HEK293 (cell line): ENCODE measurements at regions of chr11 and their contacts with region 1.

Region 1: DNA sequence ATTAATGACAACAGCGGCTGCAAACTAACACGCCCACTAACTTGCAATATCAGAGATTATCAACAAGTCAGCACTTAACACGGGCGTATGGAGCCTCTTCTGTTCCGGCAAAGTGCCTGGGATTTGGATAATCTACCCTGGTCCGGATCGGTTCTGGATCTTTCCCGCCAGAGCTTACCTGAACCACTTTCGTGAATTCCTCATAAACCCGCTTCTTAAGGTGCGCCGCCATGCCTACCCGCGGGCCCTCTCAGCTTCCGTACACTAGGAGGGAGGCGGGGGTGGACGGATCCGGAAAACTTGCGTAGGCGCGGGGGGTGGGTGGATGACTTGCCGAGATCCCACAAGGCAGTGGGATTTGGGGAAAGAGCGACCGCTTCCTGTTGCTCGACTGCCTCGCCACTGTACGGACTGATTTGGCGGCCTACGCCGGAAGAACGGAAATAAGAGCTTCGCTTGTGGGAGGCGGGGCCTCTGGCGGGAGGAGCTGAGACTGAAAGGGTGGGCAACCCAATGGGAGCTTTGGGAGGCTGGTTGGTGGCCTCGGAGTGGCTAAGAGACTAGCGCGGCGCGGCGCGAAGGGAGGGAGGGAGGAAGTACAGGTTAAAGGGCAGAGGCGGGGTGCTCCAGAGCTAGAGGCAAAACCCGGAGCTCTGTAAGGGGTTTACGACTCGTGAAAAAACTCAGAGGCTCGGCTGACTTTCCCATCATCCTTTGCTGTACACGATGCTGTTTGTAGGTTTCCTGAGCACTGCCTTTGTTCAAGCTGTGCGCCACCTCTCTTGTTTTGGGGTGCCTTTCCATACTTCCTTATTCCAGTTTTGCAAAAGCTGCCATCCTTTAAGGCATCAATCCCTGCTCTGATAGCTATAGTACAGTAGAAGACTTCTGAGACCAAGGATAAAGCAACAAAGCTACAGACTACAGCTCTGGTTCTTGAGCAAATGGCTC is at the start of gene INTS4:
- H3K4me3 ChIP-seq: peak within 1 kb of the TSS; percentile 81
- H3K27ac ChIP-seq: peak within 1 kb of the TSS; percentile 32; the same call in 1 of the 2 replicates
- H3K4me1 ChIP-seq: no peaks in the 10 kb centered on the region
- CTCF ChIP-seq: no peak

Region 2: DNA sequence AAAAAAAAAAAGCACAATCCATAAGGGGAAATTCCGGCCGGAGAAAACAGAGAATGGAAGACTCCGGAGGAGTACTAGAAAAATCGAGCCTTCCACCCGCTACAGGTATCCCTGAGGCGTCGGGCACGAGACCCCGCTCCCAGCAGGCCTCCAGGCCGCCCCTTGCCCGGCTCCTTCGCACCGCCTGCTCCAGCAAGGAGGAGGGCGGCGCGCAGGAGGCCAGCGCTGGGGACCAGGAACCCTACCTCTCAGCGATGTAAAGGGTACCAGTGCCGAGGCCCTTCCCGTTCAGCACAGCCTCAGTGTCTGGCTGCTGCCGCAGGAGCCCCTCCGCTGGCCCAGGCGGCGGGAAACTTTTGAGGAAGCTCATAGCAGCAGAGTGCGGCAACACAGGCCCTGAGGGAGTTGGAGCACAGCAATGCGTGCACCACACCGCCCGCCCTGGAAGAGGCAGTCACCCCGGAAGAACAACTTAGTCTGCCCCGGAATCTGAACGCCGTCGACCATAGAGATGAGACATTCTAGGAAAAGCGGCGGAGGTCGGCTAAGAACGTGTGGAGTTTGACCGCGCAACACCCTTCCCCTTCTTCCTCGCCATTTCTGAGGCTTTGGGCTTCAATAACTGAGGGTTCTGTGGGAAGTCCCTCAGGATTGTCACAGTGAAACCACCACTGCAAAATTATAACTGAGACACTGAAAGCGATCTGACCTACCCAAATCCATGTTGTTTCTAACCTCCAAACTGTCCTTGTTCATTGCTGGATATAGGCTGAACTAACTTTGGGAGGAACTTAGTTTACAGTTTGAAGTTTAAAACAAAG is 357.1 kb before region 1 on chr11 and contains the start of gene CLNS1A:
- CTCF ChIA-PET with region 1: no interaction called
- POLR2A ChIA-PET with region 1: interaction called, 14 read pairs
- H3K4me3 ChIP-seq: peak within 1 kb of the TSS; percentile 98
- H3K27ac ChIP-seq: peak within 1 kb of the TSS; percentile 62
- H3K4me1 ChIP-seq: no peaks in the 10 kb centered on the region
- CTCF ChIP-seq: no peak

Region 3: GRCh38 chr11:77820563-77821348 is 173.9 kb before region 1 on chr11 and contains the starts of genes AAMDC and RSF1:
- CTCF ChIA-PET with region 1: interaction called, 8 read pairs
- POLR2A ChIA-PET with region 1: interaction called, 19 read pairs
- H3K4me3 ChIP-seq: peak within 1 kb of the TSS; percentile 100
- H3K27ac ChIP-seq: peak within 1 kb of the TSS; percentile 94
- H3K4me1 ChIP-seq: no peaks in the 10 kb centered on the region
- CTCF ChIP-seq: peak; percentile 80

Region 4: DNA sequence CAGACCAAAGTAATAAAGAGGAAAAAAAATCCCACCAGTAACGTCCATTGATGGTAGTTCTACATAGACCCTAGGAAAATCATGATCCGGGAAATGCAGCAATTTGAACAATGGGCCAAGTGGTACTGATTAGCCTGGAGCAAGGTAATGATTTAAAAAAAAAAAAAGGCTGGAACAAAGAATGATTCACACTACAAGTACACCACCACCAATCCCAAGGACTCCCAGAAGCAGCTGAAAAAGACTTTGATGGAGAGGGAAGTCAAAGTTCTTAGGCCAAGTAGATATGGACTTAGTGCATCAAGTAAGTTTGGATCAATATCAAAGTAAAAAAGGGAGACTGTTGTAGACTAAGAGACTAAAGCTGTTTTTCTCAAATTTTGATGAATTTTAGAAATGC is 16.6 kb after region 1 on chr11:
- CTCF ChIA-PET with region 1: interaction called, 8 read pairs
- POLR2A ChIA-PET with region 1: interaction called, 11 read pairs
- H3K4me3 ChIP-seq: no peak overlapping the region
- H3K27ac ChIP-seq: no peak overlapping the region
- H3K4me1 ChIP-seq: no peaks in the 10 kb centered on the region
- CTCF ChIP-seq: no peak

Region 5: DNA sequence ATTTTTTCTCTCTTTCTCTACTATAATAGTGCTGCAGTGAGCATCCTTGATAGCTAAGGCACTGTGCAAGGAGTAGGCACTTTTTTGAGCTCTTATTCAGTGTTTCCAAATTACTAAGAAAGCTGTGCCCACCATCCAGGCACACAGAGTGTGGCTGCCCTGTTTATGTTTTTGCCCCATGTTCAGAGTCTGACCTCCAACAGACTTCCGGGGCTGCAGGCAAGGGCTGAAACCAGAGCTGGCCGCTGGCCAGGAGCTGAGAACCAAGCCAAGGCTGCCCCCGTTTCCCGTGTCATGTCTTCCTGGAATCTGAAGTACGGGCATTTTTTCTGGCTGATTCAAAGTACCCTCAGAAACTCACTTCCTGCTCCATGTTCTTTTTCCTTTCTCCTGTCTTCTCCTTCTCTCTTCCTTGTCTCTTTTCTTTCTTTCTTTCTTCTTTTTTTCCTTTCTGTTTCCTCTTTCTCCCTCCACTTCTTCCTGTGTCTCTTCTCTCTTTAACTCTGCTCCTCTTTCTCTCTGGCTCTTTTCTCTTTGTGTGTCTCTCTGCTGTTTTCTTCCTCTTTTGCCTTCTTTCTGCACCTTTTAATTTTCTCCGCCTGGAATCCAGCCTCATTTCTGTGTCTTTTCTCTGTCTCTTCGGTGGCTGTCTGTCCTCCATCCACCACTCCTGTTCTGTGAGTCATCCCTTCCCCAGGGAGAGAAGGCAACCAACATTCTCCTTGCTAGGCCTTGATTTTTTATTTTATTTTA is 45.4 kb after region 1 on chr11:
- CTCF ChIA-PET with region 1: interaction called, 17 read pairs
- POLR2A ChIA-PET with region 1: interaction called, 15 read pairs
- H3K4me3 ChIP-seq: no peak overlapping the region
- H3K27ac ChIP-seq: peak overlapping the region; percentile 39
- H3K4me1 ChIP-seq: no peaks in the 10 kb centered on the region
- CTCF ChIP-seq: no peak

Region 6: DNA sequence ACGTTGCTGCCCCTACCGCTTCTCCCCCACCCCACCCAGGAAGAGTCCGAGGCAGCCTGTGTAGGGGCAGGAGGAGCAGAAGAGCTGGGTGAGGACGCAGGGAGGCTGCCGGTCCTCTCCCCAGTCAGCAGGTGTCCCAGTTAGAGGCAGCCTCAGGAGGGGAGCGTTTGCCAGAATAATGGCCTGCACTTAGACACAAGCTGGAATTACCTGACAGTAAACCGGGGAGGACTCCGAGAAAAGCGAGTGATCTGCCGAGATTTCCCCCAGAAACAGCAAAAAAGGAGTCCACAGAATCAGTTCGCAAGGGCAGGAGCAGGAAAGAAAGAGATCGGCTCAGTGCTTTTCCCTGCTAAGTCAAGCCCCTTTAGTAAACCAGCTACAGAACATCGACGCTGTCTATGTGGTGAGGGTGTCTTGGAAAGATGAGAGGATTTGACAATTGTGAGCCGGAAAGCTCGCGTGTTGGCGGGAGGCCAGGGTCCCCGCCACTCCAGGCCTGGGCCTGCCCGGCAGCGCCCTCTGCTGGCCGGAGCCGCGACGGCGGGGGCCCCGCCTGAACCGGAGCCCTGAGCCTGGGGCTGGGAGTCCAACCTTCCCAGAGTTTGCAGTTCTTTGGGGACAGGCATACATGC is 51.3 kb after region 1 on chr11:
- CTCF ChIA-PET with region 1: interaction called, 17 read pairs
- POLR2A ChIA-PET with region 1: interaction called, 15 read pairs
- H3K4me3 ChIP-seq: no peak overlapping the region
- H3K27ac ChIP-seq: no peak overlapping the region
- H3K4me1 ChIP-seq: no peaks in the 10 kb centered on the region
- CTCF ChIP-seq: peak; percentile 84

Region 7: DNA sequence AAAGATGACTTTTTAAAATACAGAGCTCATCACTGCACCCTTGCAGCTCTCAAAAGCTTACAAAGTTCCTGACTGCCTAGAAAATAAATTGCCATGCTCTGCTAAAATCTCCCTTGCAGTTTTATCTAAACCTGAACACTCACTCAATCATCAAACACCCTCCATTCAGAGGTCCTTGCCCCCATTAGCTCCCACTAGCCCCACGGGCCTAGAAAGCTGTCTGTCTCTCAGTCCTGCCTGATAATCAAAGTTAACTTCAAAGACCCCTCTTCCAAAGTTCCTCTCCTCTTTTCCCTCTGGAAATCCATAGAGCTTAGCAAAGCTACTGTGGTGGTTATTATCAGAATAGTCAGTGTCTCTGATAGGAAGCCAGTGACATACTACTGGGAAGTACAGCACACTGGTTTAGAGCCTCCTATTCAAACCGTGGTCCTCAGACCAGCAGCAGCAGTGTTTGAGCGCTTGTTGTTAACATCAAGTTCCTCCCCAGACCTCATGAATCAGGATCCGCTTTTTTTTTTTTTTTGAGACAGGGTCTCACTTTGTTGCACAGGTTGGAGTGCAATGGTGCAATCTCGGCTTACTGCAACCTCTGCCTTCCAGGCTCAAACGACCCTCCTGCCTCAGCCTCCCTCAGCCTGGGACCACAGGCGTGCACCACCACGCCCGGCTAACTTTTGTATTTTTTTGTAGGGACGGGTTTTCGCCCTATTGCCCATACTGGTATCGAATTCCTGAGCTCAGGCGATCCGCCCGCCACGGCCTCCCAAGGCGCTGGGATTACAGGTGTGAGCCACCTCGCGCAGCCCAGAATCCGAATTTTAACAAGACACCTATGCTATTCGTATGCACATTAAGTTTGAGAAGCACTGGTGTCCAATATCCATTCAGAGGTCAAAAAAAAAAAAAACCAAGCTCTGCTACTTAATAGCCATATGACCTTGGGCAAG is 83.8 kb after region 1 on chr11:
- CTCF ChIA-PET with region 1: no interaction called
- POLR2A ChIA-PET with region 1: interaction called, 10 read pairs
- H3K4me3 ChIP-seq: peak overlapping the region; percentile 83
- H3K27ac ChIP-seq: no peak overlapping the region
- H3K4me1 ChIP-seq: peaks cover 3% of the 10 kb centered on the region; the same call in 1 of the 2 replicates
- CTCF ChIP-seq: no peak